ENCODE measurements at regions of chr3 and their contacts with region 1.

Region 1: DNA sequence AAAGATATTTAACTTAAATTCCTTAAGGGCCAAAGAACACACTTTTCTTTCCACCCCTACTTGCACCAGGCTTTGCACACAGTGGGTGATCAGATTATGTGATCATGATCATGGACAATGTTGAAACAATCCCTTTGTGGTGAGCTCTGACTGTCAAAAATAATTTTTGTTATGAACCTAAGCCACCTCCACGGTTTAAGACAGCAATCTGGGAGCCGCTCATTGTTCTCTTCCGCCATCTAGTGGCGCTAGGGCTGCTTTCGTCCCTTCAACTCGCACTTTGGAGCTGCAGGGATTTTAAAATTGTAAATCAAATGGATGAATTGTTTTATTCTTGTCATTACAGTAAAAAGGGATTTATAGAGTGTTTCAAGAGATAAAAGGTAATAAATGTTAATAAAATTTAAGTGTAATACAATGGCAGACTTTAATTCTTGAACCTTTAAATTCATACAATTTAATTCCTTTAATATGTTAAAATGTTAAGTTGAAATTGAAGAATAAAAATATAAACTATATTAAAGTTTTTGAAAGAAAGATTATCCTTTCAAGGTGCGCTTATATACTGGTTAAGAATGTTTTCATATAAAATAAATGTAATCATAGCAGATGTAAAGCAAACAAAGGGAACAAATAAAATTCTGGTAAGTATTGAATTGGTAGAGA is 45.3 kb upstream of the ARL6 start:
- DNase-seq: peak; percentile 60
- H3K27ac ChIP-seq: no peak overlapping the region
- CTCF ChIP-seq: peak; percentile 91

Region 2: GRCh38 chr3:96863129-96863740 is 856.1 kb before region 1 on chr3:
- CTCF ChIA-PET with region 1: interaction called, 17 read pairs
- POLR2A ChIA-PET with region 1: no interaction called
- DNase-seq: peak; percentile 13
- H3K27ac ChIP-seq: no peak overlapping the region
- CTCF ChIP-seq: peak; percentile 66